ENCODE measurements at regions of chr7 and their contacts with region 1.

Region 1: DNA sequence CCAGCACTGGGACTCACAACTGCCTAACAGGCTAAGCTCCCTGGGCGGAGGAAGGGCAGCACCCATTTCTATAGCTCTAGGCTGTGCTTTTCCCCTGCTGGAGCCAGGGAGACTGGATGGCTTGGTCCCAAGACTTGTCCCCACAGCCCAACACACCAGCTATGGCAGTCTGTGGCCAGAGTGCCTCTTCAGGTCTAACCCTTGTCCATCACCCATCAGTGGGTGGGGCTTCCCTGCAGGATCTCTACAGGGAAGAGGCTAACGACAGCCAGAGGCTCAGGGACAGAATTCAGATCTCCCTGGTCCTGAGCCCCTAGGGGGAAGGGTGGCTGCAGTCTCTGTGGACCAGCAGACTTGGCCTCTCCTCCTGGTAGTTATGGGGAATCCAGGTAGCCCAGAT is 445.9 kb upstream of the PHF14 start:
- DNase-seq: no peak
- H3K4me3 Mint-ChIP-seq: no peak overlapping the region
- H3K27ac Mint-ChIP-seq: no peak overlapping the region
- H3K4me1 Mint-ChIP-seq: no peaks in the 10 kb centered on the region
- H3K27me3 Mint-ChIP-seq: no peaks in the 10 kb centered on the region
- CTCF ChIP-seq: no peak

Region 2: DNA sequence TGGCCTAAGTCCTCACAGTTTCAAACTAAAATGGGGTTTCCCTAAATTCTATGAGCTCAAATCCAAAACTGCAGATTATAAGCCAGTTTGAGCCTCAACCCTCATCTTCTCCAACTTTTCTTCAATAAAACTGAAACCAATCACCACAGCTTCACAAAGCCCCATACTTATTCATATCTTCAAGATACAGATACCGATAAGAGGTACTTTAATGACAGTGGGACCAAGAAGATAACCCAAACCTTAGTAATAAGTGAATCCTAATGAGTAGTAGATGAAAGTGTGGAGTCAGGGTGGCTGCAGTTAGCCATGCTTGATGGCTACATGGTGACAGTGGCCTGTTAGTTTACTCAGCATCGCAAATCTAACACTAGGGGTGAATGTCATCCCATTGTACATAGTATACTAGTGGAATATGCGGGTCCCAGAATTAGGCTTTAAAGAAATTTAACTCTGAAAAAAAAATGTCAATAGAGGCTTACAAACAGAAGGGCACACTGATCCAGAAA is 50.1 kb after region 1 on chr7:
- CTCF ChIA-PET with region 1: no interaction called
- intact Hi-C with region 1: loop called (anchors 1 kb)
- DNase-seq: no peak
- H3K4me3 Mint-ChIP-seq: no peak overlapping the region
- H3K27ac Mint-ChIP-seq: no peak overlapping the region
- H3K4me1 Mint-ChIP-seq: no peaks in the 10 kb centered on the region
- H3K27me3 Mint-ChIP-seq: no peaks in the 10 kb centered on the region
- CTCF ChIP-seq: no peak